ENCODE measurements at regions of chr2 and their contacts with region 1.

Region 1: GRCh38 chr2:204177977-204178540 is 241.5 kb downstream of the ICOS start:
- DNase-seq: peak; percentile 51
- H3K4me3 Mint-ChIP-seq: no peak overlapping the region
- H3K27ac Mint-ChIP-seq: no peak overlapping the region
- H3K4me1 Mint-ChIP-seq: no peaks in the 10 kb centered on the region
- H3K27me3 Mint-ChIP-seq: peaks cover 44% of the 10 kb centered on the region
- CTCF ChIP-seq: peak; percentile 84

Region 2: GRCh38 chr2:203940039-203940438 is 238.0 kb before region 1 on chr2:
- CTCF ChIA-PET with region 1: no interaction called
- intact Hi-C with region 1: no loop called
- DNase-seq: no peak
- H3K4me3 Mint-ChIP-seq: no peak overlapping the region
- H3K27ac Mint-ChIP-seq: no peak overlapping the region
- H3K4me1 Mint-ChIP-seq: no peaks in the 10 kb centered on the region
- H3K27me3 Mint-ChIP-seq: peaks cover 29% of the 10 kb centered on the region
- CTCF ChIP-seq: no peak

Region 3: DNA sequence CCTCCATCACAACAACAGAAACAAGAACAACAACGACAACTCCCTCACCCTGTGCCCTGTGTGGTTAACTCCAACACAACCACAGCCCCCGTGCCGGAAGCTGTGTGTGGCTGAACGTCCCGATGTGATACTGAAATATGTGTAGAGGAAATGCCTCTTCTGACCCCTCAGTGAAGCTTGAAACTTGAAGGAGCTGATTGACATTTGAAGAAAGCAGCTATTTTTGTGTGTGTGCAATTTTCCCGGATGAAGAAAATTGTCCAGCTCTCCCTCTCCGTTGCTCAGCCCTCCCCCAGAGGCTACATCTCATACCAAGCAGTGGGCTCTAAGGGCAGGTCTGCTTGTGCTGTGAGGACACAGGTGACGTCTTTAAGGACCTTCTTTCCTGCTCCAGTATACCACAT is 67.7 kb before region 1 on chr2:
- CTCF ChIA-PET with region 1: no interaction called
- intact Hi-C with region 1: loop called (anchors 5 kb)
- DNase-seq: no peak
- H3K4me3 Mint-ChIP-seq: no peak overlapping the region
- H3K27ac Mint-ChIP-seq: no peak overlapping the region
- H3K4me1 Mint-ChIP-seq: peaks cover 18% of the 10 kb centered on the region
- H3K27me3 Mint-ChIP-seq: peaks cover 13% of the 10 kb centered on the region
- CTCF ChIP-seq: no peak

Measured in Calu3 (cell line).